Activated naive CD4-positive, alpha-beta T cell treated with anti-CD3 and anti-CD28 coated beads for 36 hours (primary cell): ENCODE measurements at regions of chr11 and their contacts with region 1.

Region 1: GRCh38 chr11:6251120-6251733 is 8.4 kb upstream of the CCKBR start:
- DNase-seq: peak; percentile 73
- H3K4me3 Mint-ChIP-seq: no peak overlapping the region
- H3K27ac Mint-ChIP-seq: no peak overlapping the region
- H3K4me1 Mint-ChIP-seq: no peaks in the 10 kb centered on the region
- H3K27me3 Mint-ChIP-seq: no peaks in the 10 kb centered on the region

Region 2: DNA sequence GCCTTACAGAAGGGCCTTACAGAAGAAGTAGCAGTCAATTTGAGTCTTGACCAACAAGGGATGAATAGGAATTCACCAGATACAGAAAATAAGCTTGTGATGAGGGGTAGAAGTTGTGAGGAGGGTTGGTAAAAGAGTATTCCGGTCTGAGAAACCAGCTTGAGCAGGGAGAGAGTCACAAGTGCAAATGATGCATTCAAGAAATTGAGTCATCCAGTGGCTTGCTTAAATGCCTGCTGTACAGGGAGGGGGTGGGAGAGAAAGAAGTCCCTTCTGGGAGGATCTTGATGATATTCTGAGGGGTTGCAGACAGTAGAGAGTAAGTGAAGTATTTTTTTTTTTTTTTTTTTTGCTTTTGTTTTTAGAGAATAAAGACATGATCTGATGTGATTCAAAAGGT is 17.6 kb after region 1 on chr11:
- CTCF ChIA-PET with region 1: interaction called, 11 read pairs
- intact Hi-C with region 1: no loop called
- DNase-seq: no peak
- H3K4me3 Mint-ChIP-seq: no peak overlapping the region
- H3K27ac Mint-ChIP-seq: no peak overlapping the region
- H3K4me1 Mint-ChIP-seq: no peaks in the 10 kb centered on the region
- H3K27me3 Mint-ChIP-seq: peaks cover 20% of the 10 kb centered on the region

Region 3: DNA sequence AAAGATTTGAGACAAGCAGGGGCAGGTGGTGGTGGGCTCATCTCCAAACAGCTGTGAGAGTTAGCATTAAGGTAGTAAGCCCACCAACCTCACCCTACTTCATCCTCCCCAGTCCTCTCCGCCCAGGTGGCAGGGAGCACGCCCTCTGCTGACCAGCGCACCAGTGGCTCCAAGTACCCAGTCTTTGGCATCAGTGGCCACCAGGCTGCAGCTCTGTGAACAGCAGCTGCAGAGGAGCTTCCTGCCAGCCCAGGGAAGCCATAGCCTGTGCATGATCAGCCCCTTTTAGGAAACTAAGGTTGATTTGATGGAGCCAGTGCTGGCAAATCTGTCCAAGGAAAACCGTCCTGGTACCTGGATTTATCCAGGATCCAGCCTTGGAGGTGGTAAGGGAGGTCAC is 47.4 kb after region 1 on chr11:
- CTCF ChIA-PET with region 1: interaction called, 6 read pairs
- intact Hi-C with region 1: loop called (anchors 1 kb)
- DNase-seq: peak; percentile 43
- H3K4me3 Mint-ChIP-seq: no peak overlapping the region
- H3K27ac Mint-ChIP-seq: no peak overlapping the region
- H3K4me1 Mint-ChIP-seq: no peaks in the 10 kb centered on the region
- H3K27me3 Mint-ChIP-seq: peaks cover 4% of the 10 kb centered on the region